Left colon (tissue), 2 donors: ENCODE measurements at regions of chr4 and their contacts with region 1.

Region 1: DNA sequence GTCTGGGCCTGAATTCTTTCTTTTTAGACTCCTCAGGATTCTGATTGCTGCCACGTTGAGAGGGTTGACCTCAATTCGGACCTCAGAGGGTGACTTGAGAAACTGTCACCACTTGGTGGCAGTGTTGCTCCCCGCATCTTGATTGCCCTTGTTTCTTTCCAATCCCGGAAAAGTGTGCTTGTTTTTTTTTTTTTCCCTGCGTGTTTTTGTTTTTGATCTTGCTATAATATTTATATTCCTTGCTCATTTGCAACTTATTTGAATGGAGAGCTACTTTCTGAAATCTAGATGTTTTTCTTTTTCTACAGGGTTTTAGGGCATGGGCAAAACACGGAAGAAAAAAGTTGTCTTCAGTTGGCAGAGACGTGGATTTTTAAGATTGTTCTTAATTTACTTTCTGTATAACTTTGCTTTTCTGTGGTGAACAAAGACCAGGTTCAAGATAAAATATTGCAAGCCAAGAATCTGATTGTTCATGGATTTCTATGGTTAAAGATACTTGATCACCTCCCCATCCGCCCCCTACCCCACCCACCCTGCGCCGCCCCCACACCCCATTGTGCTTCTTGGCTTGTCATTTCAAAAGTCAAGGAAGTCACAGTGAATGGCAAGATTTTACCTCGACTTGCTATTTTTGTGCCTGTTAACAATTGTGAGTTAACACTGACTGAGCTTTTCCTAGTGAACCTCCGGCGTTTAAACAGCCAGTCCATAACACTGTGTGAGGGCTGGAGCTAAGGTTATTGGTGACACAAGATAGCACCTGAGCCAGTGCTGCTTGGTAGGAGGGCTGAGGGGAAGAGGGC is 102.1 kb downstream of the PTTG2 start:
- DNase-seq: peak; percentile 71 to 89
- ATAC-seq: peak; percentile 82

Region 2: GRCh38 chr4:38675146-38676121 is 613.1 kb after region 1 on chr4:
- intact Hi-C with region 1: loop called in 1 of 2 experiments (anchors 10 kb)
- DNase-seq: peak; percentile 74 to 89
- ATAC-seq: peak; percentile 13

Region 3: GRCh38 chr4:38730830-38731646 is 668.7 kb after region 1 on chr4:
- intact Hi-C with region 1: loop called (anchors 5 to 10 kb)
- DNase-seq: peak; percentile 65 to 93
- ATAC-seq: peak; percentile 43